OCI-LY7 (cell line): ENCODE measurements at regions of chr6 and their contacts with region 1.

Region 1: DNA sequence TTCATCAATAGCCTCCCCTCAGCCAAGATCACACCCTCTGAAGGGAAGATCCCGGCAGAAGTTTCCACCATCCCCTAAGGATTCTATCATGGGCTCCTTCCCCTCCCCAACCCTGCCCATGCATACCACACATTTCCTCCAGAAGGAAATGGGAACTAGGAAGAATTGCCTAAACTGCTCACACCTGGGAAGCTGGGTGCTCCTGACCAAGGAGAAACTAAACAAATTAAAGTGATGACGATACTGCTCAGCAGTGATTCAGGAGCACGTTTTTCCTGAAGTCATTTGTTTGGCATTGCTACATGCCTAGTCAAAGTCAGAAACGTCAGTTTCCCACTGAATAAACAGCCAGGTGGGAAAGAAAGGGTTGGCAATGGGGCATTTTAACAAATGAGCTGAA is 136.1 kb upstream of the CDYL start:
- DNase-seq: no peak
- H3K4me3 ChIP-seq: no peak overlapping the region
- H3K27ac ChIP-seq: no peak overlapping the region
- H3K4me1 ChIP-seq: no peaks in the 10 kb centered on the region
- CTCF ChIP-seq: no peak

Region 2: DNA sequence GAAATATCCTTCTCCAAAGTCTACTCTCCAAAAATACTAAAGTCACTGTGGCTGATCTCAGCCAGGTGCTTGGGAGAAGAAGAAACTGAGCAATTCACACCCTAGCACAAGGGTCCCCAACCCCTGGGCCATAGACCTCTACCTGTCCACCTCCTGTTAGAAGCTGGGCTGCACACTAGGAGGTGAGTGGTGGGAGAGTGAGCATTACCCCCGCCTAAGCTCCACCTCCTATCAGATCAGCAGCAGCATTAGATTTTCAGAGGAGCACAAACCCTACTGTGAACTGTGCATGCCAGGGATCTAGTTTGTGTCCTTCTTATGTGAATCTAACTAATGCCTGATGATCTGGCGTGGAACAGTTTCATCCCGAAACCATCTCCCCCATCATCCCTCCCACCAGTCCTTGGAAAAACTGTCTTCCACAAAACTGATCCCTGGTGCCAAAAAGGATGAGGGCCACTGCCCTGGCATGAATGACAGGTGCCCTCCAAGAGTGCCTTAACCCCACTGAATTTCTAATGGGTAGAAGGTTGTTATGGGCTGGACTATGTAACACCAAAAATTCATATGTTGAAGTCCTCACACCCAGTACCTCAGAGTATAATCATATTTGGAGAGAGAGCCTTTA is 26.9 kb after region 1 on chr6:
- CTCF ChIA-PET with region 1: no interaction called
- POLR2A ChIA-PET with region 1: no interaction called
- intact Hi-C with region 1: loop called (anchors 1 kb)
- DNase-seq: no peak
- H3K4me3 ChIP-seq: no peak overlapping the region
- H3K27ac ChIP-seq: no peak overlapping the region
- H3K4me1 ChIP-seq: no peaks in the 10 kb centered on the region
- CTCF ChIP-seq: no peak